ENCODE measurements at regions of chr6 and their contacts with region 1.

Region 1: DNA sequence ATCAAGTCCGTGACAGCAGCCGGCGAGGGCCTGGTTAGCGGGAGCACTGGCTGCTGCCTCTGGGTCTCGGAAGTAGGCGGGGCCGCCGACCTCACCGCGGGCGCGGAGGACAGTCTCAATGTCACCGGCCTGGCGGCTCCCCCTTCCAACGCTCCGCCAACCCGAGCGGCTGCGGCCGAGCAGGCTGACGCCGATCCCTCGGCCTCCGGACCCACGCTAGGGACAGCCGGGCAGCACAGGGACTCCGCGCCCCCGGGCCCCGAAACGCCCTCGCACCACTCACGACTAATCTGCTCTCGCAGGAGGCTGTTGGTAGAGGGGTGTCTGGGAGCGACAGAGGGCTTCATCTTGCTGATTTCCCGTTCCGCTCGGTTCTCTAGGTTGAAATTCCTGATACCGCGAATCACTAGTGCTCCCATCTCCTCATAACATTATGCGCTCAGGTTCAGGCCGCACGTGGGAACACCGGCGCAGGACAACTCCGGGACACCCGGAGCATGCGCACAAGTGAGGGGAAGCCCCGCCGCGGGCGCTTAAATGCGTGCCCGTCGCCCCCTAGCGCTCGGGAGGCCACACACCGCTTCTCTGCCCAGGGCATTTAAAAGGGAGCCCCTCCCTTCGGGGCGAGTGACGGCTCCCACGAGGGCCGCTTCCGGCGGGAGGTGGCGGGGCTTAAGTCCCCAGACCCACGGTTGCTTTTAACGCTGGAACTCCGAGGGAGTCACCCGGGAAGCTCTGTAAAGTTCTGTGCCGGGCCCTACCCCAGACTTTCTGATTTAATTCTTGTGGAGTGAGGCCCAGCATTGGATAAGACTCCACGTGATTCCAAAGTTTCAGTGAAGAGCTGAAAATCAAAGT is at the start of gene NDUFAF4:
- DNase-seq: peak; percentile 92
- H3K4me3 Mint-ChIP-seq: peak within 1 kb of the TSS; percentile 94
- H3K27ac Mint-ChIP-seq: peak within 1 kb of the TSS; percentile 91
- H3K4me1 Mint-ChIP-seq: peaks cover 19% of the 10 kb centered on the region
- H3K27me3 Mint-ChIP-seq: peaks cover 7% of the 10 kb centered on the region
- total RNA-seq, gene NDUFAF4: 59.8 and 63.0 TPM in 2 replicates

Region 2: DNA sequence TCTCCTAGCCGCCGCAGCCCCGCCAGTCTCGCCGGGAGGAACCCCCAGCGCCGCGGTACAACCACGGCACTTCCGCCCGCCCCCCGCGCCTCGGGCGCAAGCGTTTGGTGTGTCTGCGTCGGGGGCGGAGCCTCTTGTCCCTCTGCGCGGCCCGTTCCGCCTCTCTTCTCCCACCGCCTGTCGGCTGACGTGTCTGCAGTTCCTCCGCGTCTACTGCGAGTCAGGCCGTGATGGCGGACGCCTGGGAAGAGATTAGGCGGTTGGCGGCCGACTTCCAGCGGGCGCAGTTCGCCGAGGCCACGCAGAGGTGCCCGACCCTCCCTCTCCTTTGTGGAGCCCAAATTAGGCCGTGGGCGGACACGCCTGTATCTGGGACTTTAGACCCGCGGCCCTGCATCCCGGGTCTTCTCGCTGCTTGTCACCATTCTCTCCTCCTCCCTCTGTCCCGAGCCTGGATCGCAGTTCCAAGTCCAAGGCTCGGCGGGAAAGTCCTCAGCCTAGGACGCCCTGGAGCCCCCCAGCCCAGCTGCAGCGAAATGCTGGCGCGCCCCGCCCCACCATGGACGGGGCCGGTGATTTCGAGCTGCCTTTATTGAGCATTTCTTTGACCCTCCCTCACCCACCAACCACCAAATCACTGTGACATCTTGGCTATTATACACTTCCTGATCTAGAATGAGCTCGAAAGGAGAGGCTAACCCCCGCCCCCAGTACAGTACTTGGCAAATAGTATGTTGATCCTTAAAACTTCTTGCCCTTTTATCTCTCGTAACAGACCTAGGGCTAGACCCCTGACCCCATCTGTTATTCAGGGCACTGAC is 375.8 kb before region 1 on chr6 and contains the start of gene UFL1:
- intact Hi-C with region 1: loop called (anchors 5 kb)
- DNase-seq: peak; percentile 90
- H3K4me3 Mint-ChIP-seq: peak within 1 kb of the TSS; percentile 99
- H3K27ac Mint-ChIP-seq: peak within 1 kb of the TSS; percentile 99
- H3K4me1 Mint-ChIP-seq: peaks cover 12% of the 10 kb centered on the region
- H3K27me3 Mint-ChIP-seq: no peaks in the 10 kb centered on the region
- total RNA-seq, gene UFL1: 27.0 and 27.3 TPM in 2 replicates

Region 3: DNA sequence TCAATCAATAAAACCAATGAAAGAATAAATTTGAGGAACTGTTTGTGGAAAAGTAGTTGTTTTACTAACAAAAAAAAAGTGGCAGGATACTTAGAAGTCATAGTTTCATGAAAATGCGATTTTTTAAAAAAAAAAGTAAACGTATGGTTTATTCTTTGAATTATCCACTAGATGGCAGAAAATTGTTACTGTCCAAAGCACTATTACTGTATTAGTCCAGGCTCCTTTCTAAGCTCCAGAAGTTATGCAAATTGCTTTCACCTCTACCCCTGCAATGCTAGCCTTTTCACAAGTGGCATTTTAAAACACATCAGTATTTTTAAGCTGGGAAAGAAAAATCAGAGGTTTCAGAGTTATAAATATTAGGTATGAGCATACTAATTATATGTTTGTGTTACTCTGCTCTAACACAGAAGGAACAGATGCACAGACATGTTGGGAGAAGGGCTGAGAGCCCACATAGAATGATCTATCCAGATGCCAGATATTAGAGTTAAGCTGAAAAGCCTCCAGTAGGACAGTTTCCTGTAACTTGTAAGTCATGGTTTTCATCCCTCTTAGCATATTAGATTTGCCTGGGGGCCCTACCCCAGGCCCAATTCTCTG is 270.8 kb before region 1 on chr6:
- intact Hi-C with region 1: loop called (anchors 2 kb)
- DNase-seq: no peak
- H3K4me3 Mint-ChIP-seq: no peak overlapping the region
- H3K27ac Mint-ChIP-seq: no peak overlapping the region
- H3K4me1 Mint-ChIP-seq: peaks cover 7% of the 10 kb centered on the region
- H3K27me3 Mint-ChIP-seq: peaks cover 17% of the 10 kb centered on the region

Region 4: GRCh38 chr6:96837081-96837971 is 60.3 kb before region 1 on chr6 and contains the start of gene GPR63:
- intact Hi-C with region 1: loop called (anchors 1 kb)
- DNase-seq: peak; percentile 84
- H3K4me3 Mint-ChIP-seq: peak within 1 kb of the TSS; percentile 90
- H3K27ac Mint-ChIP-seq: peak within 1 kb of the TSS; percentile 43
- H3K4me1 Mint-ChIP-seq: peaks cover 34% of the 10 kb centered on the region
- H3K27me3 Mint-ChIP-seq: peaks cover 24% of the 10 kb centered on the region
- total RNA-seq, gene GPR63: 4.5 and 5.0 TPM in 2 replicates

Region 5: GRCh38 chr6:97059473-97059872 is 161.9 kb after region 1 on chr6:
- intact Hi-C with region 1: loop called (anchors 1 kb)
- DNase-seq: no peak
- H3K4me3 Mint-ChIP-seq: no peak overlapping the region
- H3K27ac Mint-ChIP-seq: no peak overlapping the region
- H3K4me1 Mint-ChIP-seq: peaks cover 4% of the 10 kb centered on the region
- H3K27me3 Mint-ChIP-seq: peaks cover 6% of the 10 kb centered on the region